ENCODE measurements at regions of chr11 and their contacts with region 1.

Region 1: DNA sequence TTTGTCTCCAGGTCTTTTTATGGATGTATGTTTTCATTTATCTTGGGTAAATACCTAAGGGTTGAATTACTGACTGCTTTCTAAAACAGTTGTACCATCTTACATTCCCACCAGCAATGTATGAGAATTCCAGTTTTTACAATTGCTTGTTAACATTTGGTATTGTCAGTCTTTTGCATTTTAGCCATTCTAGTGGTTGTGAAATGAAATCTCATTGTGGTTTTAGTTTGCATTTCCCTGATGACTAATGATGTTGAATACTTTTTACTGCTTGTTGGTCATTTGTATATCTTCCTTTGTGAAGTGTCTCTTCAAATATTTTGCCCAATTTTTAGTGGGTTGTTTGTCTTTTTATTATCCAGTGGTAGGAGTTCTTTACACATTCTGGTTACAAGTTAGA is 92.8 kb downstream of the ARFGAP2 start:
- DNase-seq: peak in 2 of 3 donors; percentile 1 to 14
- H3K4me3 ChIP-seq: no peak overlapping the region
- H3K4me3 Mint-ChIP-seq: no peak overlapping the region
- H3K27ac ChIP-seq: peak overlapping the region in 1 of 2 donors; percentile 38
- H3K27ac Mint-ChIP-seq: no peak overlapping the region
- H3K4me1 ChIP-seq: peaks cover 3 to 11% of the 10 kb centered on the region in 2 donors
- H3K4me1 Mint-ChIP-seq: peaks cover 19% of the 10 kb centered on the region
- H3K27me3 ChIP-seq: no peaks in the 10 kb centered on the region
- H3K27me3 Mint-ChIP-seq: peaks cover 0 to 3% (median 0%) of the 10 kb centered on the region in 3 donors
- CTCF ChIP-seq: no peak

Region 2: GRCh38 chr11:46183819-46184218 is 900.1 kb before region 1 on chr11:
- intact Hi-C with region 1: loop called in 1 of 2 experiments (anchors 10 kb)
- DNase-seq: no peak
- H3K4me3 ChIP-seq: no peak overlapping the region
- H3K4me3 Mint-ChIP-seq: no peak overlapping the region
- H3K27ac ChIP-seq: no peak overlapping the region
- H3K27ac Mint-ChIP-seq: no peak overlapping the region
- H3K4me1 ChIP-seq: no peaks in the 10 kb centered on the region
- H3K4me1 Mint-ChIP-seq: peaks cover 7% of the 10 kb centered on the region
- H3K27me3 ChIP-seq: no peaks in the 10 kb centered on the region
- H3K27me3 Mint-ChIP-seq: peaks cover 0 to 15% (median 4%) of the 10 kb centered on the region in 3 donors
- CTCF ChIP-seq: no peak